Activated CD4-positive, alpha-beta T cell treated with anti-CD3 and anti-CD28 coated beads for 36 hours (primary cell): ENCODE measurements at regions of chr6 and their contacts with region 1.

Region 1: GRCh38 chr6:131844243-131844841 is 36.5 kb downstream of the ENPP1 start:
- DNase-seq: no peak
- ATAC-seq: no peak
- H3K4me3 Mint-ChIP-seq: no peak overlapping the region
- H3K27ac Mint-ChIP-seq: no peak overlapping the region
- H3K4me1 Mint-ChIP-seq: no peaks in the 10 kb centered on the region
- H3K27me3 Mint-ChIP-seq: peaks cover 25% of the 10 kb centered on the region

Region 2: GRCh38 chr6:131828100-131828499 is 16.2 kb before region 1 on chr6:
- CTCF ChIA-PET with region 1: no interaction called
- POLR2A ChIA-PET with region 1: no interaction called
- intact Hi-C with region 1: no loop called
- DNase-seq: no peak
- ATAC-seq: no peak
- H3K4me3 Mint-ChIP-seq: no peak overlapping the region
- H3K27ac Mint-ChIP-seq: no peak overlapping the region
- H3K4me1 Mint-ChIP-seq: no peaks in the 10 kb centered on the region
- H3K27me3 Mint-ChIP-seq: peaks cover 16% of the 10 kb centered on the region

Region 3: DNA sequence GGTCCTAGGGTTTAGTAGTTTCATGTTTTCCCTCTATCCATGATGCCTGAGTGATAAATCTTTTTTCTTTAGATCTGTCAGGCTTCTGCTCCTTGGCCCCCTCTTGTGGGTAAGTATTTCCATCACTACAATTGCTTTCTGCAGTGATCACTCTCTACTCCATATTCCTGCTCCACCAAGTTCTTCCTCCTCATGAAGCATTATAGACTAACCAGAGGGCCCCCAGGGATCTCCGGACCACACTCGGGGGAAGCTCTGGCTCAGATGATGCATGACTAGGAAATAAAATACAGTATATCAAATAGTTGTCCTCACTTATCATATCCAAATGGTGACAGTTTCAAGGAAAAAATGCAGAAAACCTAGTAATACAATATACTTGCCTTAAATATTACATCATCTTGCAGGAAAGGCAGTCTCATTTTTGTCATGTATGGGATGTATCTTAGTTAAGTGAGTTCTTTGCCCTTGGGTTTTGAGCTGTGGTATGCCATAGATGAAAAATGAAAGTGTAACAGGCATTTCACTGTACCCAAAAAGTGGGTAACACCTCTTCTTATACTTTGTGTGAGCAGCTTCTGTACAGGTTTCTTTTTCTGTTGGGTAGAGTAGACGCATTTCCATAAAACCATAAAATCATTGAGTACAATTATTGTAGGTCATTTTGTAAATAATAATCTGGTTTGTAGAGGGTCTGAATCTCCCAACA is 1195.9 kb after region 1 on chr6:
- CTCF ChIA-PET with region 1: no interaction called
- POLR2A ChIA-PET with region 1: interaction called, 16 read pairs
- intact Hi-C with region 1: no loop called
- DNase-seq: no peak
- ATAC-seq: no peak
- H3K4me3 Mint-ChIP-seq: no peak overlapping the region
- H3K27ac Mint-ChIP-seq: no peak overlapping the region
- H3K4me1 Mint-ChIP-seq: no peaks in the 10 kb centered on the region
- H3K27me3 Mint-ChIP-seq: peaks cover 4% of the 10 kb centered on the region